ENCODE measurements at regions of chr4 and their contacts with region 1.

Region 1: DNA sequence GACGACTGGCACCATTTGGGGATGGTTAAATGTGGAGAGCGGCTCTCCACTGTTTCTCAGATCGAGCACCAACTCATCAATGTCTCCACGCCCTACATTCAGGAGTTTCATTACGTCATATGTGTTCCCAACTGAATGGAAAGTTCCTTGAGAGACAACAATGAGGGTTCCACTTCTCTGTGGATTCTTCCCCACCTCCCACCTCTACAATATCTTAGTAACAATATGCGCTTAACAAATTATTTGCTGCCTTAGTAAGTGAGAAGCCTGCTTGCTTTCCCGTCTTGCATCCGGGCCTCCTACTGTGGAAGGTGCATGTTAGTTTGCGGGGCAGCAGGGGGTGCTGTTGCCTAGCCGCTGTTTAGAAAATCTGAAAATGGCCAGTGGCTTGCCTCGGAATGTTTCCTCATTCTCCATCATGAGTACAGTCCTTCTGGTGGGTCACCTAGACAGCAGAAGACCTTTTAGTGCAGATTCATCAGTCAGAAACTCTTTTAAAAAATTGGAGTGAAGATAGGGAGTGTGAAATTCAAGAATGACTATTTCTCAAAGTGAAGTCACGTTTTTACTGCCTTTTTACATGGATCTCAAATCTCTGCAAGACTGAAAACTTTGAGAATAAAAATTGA is 55.7 kb downstream of the PHOX2B start:
- H3K4me3 Mint-ChIP-seq: no peak overlapping the region
- H3K27ac Mint-ChIP-seq: no peak overlapping the region
- H3K4me1 Mint-ChIP-seq: no peaks in the 10 kb centered on the region
- H3K27me3 Mint-ChIP-seq: peaks cover 7% of the 10 kb centered on the region

Region 2: DNA sequence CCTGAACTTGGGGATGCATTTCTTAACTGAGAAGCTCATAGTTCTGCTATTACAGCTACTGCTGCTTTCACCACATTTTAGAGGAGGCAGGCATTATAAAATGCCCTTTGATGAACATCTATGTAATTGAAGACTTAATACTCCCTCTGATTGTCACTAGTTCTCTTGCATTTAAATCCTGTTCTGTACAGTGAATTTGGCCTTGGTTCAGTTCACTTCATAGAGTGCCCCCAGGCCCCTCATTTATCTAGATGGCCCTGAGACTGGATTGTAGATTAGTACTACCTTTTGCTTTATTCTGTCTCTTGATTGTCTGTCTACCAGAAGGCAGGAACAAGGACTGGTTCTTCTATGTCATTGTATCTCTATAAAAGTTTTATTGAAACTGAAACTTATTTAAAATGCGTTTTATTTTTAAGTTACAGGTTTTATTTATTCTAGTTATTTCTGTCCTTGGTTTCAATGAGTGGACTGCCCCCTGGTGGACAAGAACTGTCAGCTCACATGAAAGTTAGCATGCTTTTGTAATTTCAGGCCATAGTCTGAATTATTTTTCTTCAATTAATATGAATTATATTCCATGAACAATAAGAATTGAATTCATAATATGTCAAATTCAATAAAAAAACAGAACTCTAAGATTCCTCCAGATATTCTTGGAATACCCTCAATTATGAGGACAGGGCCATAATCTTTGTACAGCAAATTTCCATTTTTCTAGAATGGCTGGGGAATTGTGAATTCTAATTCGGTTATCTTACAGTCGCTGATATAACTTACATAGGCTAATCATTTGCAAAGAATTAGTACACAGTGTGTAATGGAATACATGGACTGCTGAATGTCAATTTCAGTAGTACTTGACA is 195.2 kb after region 1 on chr4:
- intact Hi-C with region 1: loop called (anchors 2 kb)
- H3K4me3 Mint-ChIP-seq: no peak overlapping the region
- H3K27ac Mint-ChIP-seq: no peak overlapping the region
- H3K4me1 Mint-ChIP-seq: no peaks in the 10 kb centered on the region
- H3K27me3 Mint-ChIP-seq: peaks cover 51% of the 10 kb centered on the region

Region 3: GRCh38 chr4:41957634-41958033 is 264.8 kb after region 1 on chr4:
- intact Hi-C with region 1: no loop called
- H3K4me3 Mint-ChIP-seq: no peak overlapping the region
- H3K27ac Mint-ChIP-seq: no peak overlapping the region
- H3K4me1 Mint-ChIP-seq: peaks cover 7% of the 10 kb centered on the region
- H3K27me3 Mint-ChIP-seq: no peaks in the 10 kb centered on the region